Naive thymus-derived CD4-positive, alpha-beta T cell (primary cell): ENCODE measurements at regions of chr10 and their contacts with region 1.

Region 1: DNA sequence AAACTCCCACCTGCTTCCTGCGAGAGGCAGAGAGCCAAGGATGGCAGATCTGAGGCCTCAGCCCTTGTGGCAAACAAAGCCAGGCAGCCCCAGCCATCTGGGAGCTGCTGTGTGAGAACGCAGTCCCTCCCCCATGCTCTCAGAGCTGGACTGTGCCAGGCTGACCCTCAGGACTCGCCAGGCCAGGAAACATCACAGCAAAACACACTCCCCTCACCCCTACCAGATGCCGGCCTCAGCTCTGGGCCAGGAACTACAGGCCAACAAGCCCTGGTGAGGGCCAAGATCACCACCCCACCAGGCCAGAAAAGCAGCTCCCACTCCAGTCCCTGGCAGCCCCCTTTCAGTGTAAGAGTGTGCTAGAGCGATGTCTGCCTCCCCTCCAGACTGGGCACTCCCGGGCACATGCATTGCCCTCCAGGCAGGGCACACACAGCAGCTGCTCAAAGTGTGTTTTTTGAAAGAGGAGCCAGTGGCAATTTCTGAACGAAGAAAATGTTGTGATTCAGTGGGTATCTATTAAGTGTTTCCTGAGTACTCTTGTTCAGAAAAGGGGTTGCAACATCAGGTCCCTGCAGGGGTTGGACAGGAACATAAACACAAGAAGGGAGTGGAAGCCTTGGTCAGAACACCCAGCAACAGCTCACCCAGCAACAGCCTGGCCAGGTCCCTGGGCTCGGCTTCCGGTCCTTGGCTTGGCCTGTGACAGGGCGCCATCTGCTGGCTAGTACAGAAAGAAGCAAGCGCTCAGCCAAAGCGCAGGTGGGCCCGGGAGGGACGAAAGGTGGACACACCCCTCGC is 18.3 kb downstream of the LRRC20 start:
- DNase-seq: peak; percentile 62 to 83 (median 77)
- ATAC-seq: peak; percentile 98
- H3K4me3 ChIP-seq: no peak overlapping the region
- H3K4me3 Mint-ChIP-seq: peak overlapping the region in 5 of 10 donors; percentile 23 to 71 (median 42)
- H3K27ac ChIP-seq: no peak overlapping the region
- H3K27ac Mint-ChIP-seq: peak overlapping the region in 4 of 9 donors; percentile 25 to 50 (median 36)
- H3K4me1 ChIP-seq: peaks cover 0 to 6% of the 10 kb centered on the region in 2 donors
- H3K4me1 Mint-ChIP-seq: peaks cover 7 to 12% (median 9%) of the 10 kb centered on the region in 7 donors
- H3K27me3 ChIP-seq: no peaks in the 10 kb centered on the region
- H3K27me3 Mint-ChIP-seq: peaks cover 0 to 3% (median 0%) of the 10 kb centered on the region in 5 donors

Region 2: DNA sequence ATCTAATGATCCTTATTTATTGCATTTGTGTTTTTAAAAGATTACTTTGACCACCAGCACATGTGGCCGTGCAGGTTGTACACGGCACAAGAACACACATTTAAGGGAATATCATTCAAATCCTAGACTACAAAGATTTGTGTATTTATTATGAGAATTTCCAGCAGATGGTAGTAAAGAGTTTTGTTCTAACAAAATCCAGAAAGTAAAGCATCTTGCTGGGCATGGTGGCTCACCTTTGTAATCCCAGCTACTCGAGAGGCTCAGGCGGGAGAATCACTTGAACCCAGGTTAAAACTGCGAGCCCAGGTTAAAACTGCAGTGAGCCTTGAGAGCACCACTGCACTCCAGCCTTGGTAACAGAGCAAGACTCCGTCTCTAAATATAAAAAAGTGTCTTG is 280.0 kb before region 1 on chr10:
- CTCF ChIA-PET with region 1: no interaction called
- POLR2A ChIA-PET with region 1: no interaction called
- intact Hi-C with region 1: loop called in 1 of 2 experiments (anchors 1 kb)
- DNase-seq: peak in 5 of 9 donors; percentile 5 to 18 (median 9)
- ATAC-seq: no peak
- H3K4me3 ChIP-seq: no peak overlapping the region
- H3K4me3 Mint-ChIP-seq: no peak overlapping the region
- H3K27ac ChIP-seq: no peak overlapping the region
- H3K27ac Mint-ChIP-seq: no peak overlapping the region
- H3K4me1 ChIP-seq: no peaks in the 10 kb centered on the region
- H3K4me1 Mint-ChIP-seq: peaks cover 0 to under 1% (median 0%) of the 10 kb centered on the region in 7 donors
- H3K27me3 ChIP-seq: no peaks in the 10 kb centered on the region
- H3K27me3 Mint-ChIP-seq: peaks cover 0 to 12% (median 0%) of the 10 kb centered on the region in 5 donors

Region 3: GRCh38 chr10:70176441-70176840 is 187.7 kb before region 1 on chr10:
- CTCF ChIA-PET with region 1: no interaction called
- POLR2A ChIA-PET with region 1: no interaction called
- intact Hi-C with region 1: no loop called
- DNase-seq: no peak
- ATAC-seq: no peak
- H3K4me3 ChIP-seq: no peak overlapping the region
- H3K4me3 Mint-ChIP-seq: no peak overlapping the region
- H3K27ac ChIP-seq: no peak overlapping the region
- H3K27ac Mint-ChIP-seq: no peak overlapping the region
- H3K4me1 ChIP-seq: peaks cover 13 to 22% of the 10 kb centered on the region in 2 donors
- H3K4me1 Mint-ChIP-seq: peaks cover 12 to 25% (median 22%) of the 10 kb centered on the region in 7 donors
- H3K27me3 ChIP-seq: no peaks in the 10 kb centered on the region
- H3K27me3 Mint-ChIP-seq: peaks cover 0 to 26% (median 10%) of the 10 kb centered on the region in 5 donors

Region 4: GRCh38 chr10:70227548-70228320 is 136.4 kb before region 1 on chr10:
- CTCF ChIA-PET with region 1: interaction called, 192 read pairs
- POLR2A ChIA-PET with region 1: interaction called, 4 read pairs
- intact Hi-C with region 1: no loop called
- DNase-seq: no peak
- ATAC-seq: no peak
- H3K4me3 ChIP-seq: no peak overlapping the region
- H3K4me3 Mint-ChIP-seq: no peak overlapping the region
- H3K27ac ChIP-seq: no peak overlapping the region
- H3K27ac Mint-ChIP-seq: no peak overlapping the region
- H3K4me1 ChIP-seq: peaks cover 4 to 5% of the 10 kb centered on the region in 2 donors
- H3K4me1 Mint-ChIP-seq: peaks cover 13 to 52% (median 37%) of the 10 kb centered on the region in 7 donors
- H3K27me3 ChIP-seq: no peaks in the 10 kb centered on the region
- H3K27me3 Mint-ChIP-seq: no peaks in the 10 kb centered on the region

Region 5: GRCh38 chr10:70272925-70273316 is 91.2 kb before region 1 on chr10:
- CTCF ChIA-PET with region 1: no interaction called
- POLR2A ChIA-PET with region 1: no interaction called
- intact Hi-C with region 1: loop called in 1 of 2 experiments (anchors 1 kb)
- DNase-seq: peak in 5 of 9 donors; percentile 3 to 42 (median 36)
- ATAC-seq: peak; percentile 77
- H3K4me3 ChIP-seq: no peak overlapping the region
- H3K4me3 Mint-ChIP-seq: peak overlapping the region in 5 of 10 donors; percentile 21 to 47 (median 23)
- H3K27ac ChIP-seq: no peak overlapping the region
- H3K27ac Mint-ChIP-seq: peak overlapping the region in 2 of 9 donors; percentile 30 to 46
- H3K4me1 ChIP-seq: no peaks in the 10 kb centered on the region
- H3K4me1 Mint-ChIP-seq: peaks cover 5 to 22% (median 6%) of the 10 kb centered on the region in 7 donors
- H3K27me3 ChIP-seq: no peaks in the 10 kb centered on the region
- H3K27me3 Mint-ChIP-seq: peaks cover 0 to 4% (median 0%) of the 10 kb centered on the region in 5 donors

Region 6: DNA sequence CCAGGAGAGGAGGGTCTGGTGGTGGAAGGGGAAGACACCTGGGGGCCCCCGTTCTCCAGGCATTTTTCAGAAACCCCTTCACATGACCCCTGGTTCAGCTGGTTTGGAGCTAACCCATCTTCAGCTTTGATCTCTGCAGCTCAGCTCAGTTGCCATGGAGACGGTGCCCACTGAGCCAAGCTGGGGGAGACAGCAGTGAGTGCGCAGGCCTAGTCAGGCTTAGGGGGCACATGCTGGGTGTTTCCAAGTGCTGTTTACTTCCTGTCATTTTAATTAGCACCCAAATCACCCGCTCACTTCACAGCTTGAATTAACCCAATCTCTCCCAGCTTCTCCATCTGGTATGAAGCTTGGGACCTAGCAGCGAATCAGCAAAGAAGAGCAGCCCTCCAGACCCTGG is 1715.2 kb after region 1 on chr10:
- CTCF ChIA-PET with region 1: no interaction called
- POLR2A ChIA-PET with region 1: no interaction called
- intact Hi-C with region 1: no loop called
- DNase-seq: peak in 6 of 9 donors; percentile 61 to 87 (median 72)
- ATAC-seq: peak; percentile 71
- H3K4me3 ChIP-seq: peak overlapping the region; percentile 21
- H3K4me3 Mint-ChIP-seq: peak overlapping the region; percentile 51 to 98 (median 84)
- H3K27ac ChIP-seq: peak overlapping the region; percentile 99
- H3K27ac Mint-ChIP-seq: peak overlapping the region; percentile 56 to 96 (median 91)
- H3K4me1 ChIP-seq: peaks cover 91 to 93% of the 10 kb centered on the region in 2 donors
- H3K4me1 Mint-ChIP-seq: peaks cover 70 to 98% (median 89%) of the 10 kb centered on the region in 7 donors
- H3K27me3 ChIP-seq: no peaks in the 10 kb centered on the region
- H3K27me3 Mint-ChIP-seq: no peaks in the 10 kb centered on the region